IMR-90 (cell line): ENCODE measurements at regions of chr5 and their contacts with region 1.

Region 1: GRCh38 chr5:51881901-51882300 is 498.7 kb downstream of the ISL1 start:
- DNase-seq: no peak
- ATAC-seq: no peak
- H3K4me3 ChIP-seq: no peak overlapping the region
- H3K27ac ChIP-seq: no peak overlapping the region
- H3K4me1 ChIP-seq: no peaks in the 10 kb centered on the region
- H3K27me3 ChIP-seq: no peaks in the 10 kb centered on the region
- CTCF ChIP-seq: no peak
- POLR2A ChIP-seq: no peak
- RAD21 ChIP-seq: no peak

Region 2: GRCh38 chr5:50751064-50751657 is 1130.7 kb before region 1 on chr5:
- CTCF ChIA-PET with region 1: no interaction called
- POLR2A ChIA-PET with region 1: no interaction called
- dilution Hi-C with region 1: no loop called
- in situ Hi-C with region 1: no loop called
- intact Hi-C with region 1: no loop called
- DNase-seq: peak; percentile 55
- ATAC-seq: peak; percentile 86
- H3K4me3 ChIP-seq: no peak overlapping the region
- H3K27ac ChIP-seq: no peak overlapping the region
- H3K4me1 ChIP-seq: no peaks in the 10 kb centered on the region
- H3K27me3 ChIP-seq: no peaks in the 10 kb centered on the region
- CTCF ChIP-seq: peak; percentile 79
- POLR2A ChIP-seq: no peak
- RAD21 ChIP-seq: peak; percentile 84

Region 3: DNA sequence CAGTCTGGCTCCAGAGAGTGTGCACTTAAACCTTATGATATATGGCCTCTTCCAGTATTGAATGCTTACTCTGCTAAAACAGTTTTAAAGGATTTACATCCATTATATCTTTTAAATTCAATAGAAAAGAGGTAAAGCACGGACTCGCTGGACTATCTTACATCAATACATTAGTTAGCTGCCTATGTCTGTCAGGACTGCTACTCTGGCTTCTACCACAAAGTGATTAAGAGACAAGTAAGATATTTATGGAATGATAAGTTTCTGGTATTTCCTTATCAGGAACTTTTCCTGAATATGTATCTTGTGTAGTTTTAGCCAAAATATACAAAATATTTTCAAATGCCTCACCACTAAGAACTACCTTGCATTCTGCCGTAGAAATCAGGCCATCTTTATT is 203.6 kb before region 1 on chr5:
- CTCF ChIA-PET with region 1: no interaction called
- POLR2A ChIA-PET with region 1: no interaction called
- dilution Hi-C with region 1: no loop called
- in situ Hi-C with region 1: no loop called
- intact Hi-C with region 1: no loop called
- DNase-seq: no peak
- ATAC-seq: no peak
- H3K4me3 ChIP-seq: no peak overlapping the region
- H3K27ac ChIP-seq: no peak overlapping the region
- H3K4me1 ChIP-seq: no peaks in the 10 kb centered on the region
- H3K27me3 ChIP-seq: no peaks in the 10 kb centered on the region
- CTCF ChIP-seq: no peak
- POLR2A ChIP-seq: no peak
- RAD21 ChIP-seq: no peak

Region 4: DNA sequence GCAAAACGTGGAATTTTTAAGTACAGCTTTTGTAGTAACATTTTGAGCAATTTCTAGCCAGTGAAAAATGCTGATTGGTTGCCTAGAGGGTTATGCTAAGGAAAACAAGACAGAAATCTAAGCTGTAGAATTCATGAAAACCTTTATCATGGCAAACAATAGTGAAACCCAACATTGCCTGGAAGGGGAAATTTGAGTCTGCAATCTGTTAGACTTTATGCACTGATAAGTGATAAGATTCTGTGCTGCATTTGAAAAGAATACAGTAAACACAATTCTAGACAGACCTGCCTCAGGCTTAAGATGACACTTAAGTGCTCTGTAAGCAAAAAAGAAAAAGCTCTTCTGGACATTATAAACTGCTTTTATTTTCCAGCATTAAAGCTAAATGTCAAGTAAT is 20.6 kb after region 1 on chr5:
- CTCF ChIA-PET with region 1: no interaction called
- POLR2A ChIA-PET with region 1: no interaction called
- dilution Hi-C with region 1: no loop called
- in situ Hi-C with region 1: no loop called
- intact Hi-C with region 1: loop called (anchors 1 kb)
- DNase-seq: no peak
- ATAC-seq: no peak
- H3K4me3 ChIP-seq: no peak overlapping the region
- H3K27ac ChIP-seq: no peak overlapping the region
- H3K4me1 ChIP-seq: no peaks in the 10 kb centered on the region
- H3K27me3 ChIP-seq: no peaks in the 10 kb centered on the region
- CTCF ChIP-seq: no peak
- POLR2A ChIP-seq: no peak
- RAD21 ChIP-seq: no peak